ENCODE measurements at regions of chrX and their contacts with region 1.

Region 1: GRCh38 chrX:129957241-129958082 is 25.0 kb upstream of the BCORL1 start:
- DNase-seq: peak; percentile 85
- H3K4me3 Mint-ChIP-seq: peak overlapping the region; percentile 69
- H3K27ac Mint-ChIP-seq: peak overlapping the region; percentile 51
- H3K4me1 Mint-ChIP-seq: peaks cover 30% of the 10 kb centered on the region
- H3K27me3 Mint-ChIP-seq: peaks cover 6% of the 10 kb centered on the region

Region 2: DNA sequence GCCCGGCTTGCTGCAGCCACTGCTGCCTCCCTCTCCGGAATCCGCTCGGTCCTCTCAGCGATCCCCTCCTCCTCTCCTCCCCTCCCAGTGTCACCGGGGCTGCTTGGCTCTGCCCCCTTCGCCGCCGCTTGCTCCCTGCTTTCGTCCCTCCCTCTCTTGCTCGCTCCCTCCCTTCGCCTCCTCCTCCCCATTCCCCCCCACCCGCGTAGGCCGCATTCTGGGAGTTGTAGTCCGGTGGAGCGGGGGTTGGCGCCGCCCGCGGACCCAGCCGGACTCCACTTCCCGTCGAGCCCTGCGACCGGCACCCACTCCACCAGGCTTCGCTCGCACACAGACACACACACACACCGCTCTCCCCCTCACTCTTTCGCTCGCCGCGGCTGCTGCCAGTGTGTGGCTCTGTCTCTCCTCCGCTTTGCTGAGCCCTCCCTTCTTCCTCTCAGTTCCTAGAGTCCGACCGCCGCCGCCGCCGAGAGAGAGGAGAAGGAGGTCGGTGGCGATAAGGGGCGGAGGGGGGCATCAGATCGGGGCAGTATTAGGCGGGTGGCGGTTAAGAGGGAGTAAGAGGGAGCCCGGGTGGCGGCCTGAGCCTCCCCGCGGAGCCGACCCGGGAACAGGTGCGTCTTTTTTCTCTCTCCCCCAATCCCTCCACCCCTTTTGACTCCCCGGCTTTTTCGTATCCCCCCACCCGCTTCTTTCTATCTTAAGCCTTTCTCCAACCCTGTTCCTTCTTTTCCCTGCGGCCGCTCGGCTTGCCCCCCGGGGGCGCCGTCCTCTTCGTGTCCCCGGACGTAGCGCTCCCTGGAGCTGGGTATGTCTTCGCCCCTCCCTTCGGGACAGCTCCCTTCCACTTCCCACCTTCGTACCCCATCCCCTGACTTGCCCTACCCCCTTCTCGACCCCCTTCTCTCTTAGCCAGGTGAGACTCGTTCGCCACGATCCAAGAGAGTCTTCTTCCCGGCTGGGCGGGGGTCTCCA is 25.1 kb after region 1 on chrX and contains the start of gene BCORL1:
- intact Hi-C with region 1: loop called (anchors 1 kb)
- DNase-seq: peak; percentile 94
- H3K4me3 Mint-ChIP-seq: no peak within 1 kb of the TSS
- H3K27ac Mint-ChIP-seq: peak within 1 kb of the TSS; percentile 78
- H3K4me1 Mint-ChIP-seq: peaks cover 10% of the 10 kb centered on the region
- H3K27me3 Mint-ChIP-seq: peaks cover 24% of the 10 kb centered on the region
- total RNA-seq, gene BCORL1: 8.0 and 9.2 TPM in 2 replicates